Dendritic cell treated with granulocyte-macrophage colony-stimulating factor and Interleukin-4, amounts not matched to agents 40 ng/mL and 50 ng/mL, for 4 days (primary cell): ENCODE measurements at regions of chr11 and their contacts with region 1.

Region 1: GRCh38 chr11:102451681-102452460 is 694 bp downstream of the TMEM123 start:
- H3K4me3 Mint-ChIP-seq: peak overlapping the region; percentile 95
- H3K27ac Mint-ChIP-seq: peak overlapping the region; percentile 96
- H3K4me1 Mint-ChIP-seq: peaks cover 67% of the 10 kb centered on the region
- H3K27me3 Mint-ChIP-seq: no peaks in the 10 kb centered on the region

Region 2: DNA sequence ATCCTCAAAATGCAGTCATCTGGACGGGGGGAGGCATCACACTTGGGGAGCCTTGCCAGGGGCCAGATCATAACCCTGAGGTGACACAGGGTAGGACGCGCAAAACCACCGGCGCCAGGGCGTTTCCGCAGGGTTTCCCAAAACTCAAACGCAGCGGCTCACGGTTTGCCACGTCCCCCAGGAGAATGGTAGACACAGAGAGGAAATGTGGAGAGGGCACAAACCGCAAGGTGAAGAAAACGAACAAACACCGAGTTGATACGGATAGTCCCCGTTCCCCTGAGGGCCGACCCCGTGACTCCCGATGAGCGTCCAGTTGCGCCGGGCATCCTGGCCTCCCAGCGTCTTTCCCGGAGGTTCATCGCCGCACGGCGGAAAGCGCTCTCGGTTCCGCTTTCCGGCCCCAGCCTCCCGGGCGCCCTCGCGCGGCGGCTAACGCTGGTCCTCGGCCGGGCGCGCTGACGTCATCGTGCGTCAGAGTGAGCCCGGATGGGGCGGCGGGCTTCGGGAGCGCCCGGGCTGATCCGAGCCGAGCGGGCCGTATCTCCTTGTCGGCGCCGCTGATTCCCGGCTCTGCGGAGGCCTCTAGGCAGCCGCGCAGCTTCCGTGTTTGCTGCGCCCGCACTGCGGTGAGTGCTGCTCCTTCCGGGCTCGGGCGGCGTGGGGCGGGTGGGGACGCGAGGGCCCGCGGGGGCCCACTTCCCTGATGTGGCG is 105.0 kb before region 1 on chr11 and contains the start of gene BIRC2:
- intact Hi-C with region 1: loop called (anchors 2 kb)
- H3K4me3 Mint-ChIP-seq: peak within 1 kb of the TSS; percentile 88
- H3K27ac Mint-ChIP-seq: peak within 1 kb of the TSS; percentile 94
- H3K4me1 Mint-ChIP-seq: peaks cover 18% of the 10 kb centered on the region
- H3K27me3 Mint-ChIP-seq: no peaks in the 10 kb centered on the region

Region 3: DNA sequence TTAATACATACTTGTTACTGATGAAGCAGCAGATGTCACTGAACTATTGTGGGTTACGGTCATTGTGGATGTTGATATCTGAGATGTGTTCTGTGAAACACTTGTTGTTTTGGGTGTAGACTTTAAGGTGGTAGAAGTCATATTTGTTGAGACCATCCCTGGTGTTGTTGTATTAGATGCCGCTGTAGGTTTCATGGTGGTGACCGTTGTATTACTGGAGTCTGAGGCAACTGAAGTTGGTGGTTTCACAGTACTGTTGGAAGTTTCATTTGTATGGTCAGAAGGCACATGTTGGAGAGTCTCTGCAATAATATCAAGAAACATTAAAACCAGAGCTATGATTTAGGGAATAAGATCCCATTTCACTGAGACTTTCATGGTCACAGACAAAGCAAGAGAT is 50.0 kb before region 1 on chr11:
- intact Hi-C with region 1: loop called (anchors 5 kb)
- H3K4me3 Mint-ChIP-seq: no peak overlapping the region
- H3K27ac Mint-ChIP-seq: peak overlapping the region; percentile 68
- H3K4me1 Mint-ChIP-seq: peaks cover 41% of the 10 kb centered on the region
- H3K27me3 Mint-ChIP-seq: no peaks in the 10 kb centered on the region

Region 4: DNA sequence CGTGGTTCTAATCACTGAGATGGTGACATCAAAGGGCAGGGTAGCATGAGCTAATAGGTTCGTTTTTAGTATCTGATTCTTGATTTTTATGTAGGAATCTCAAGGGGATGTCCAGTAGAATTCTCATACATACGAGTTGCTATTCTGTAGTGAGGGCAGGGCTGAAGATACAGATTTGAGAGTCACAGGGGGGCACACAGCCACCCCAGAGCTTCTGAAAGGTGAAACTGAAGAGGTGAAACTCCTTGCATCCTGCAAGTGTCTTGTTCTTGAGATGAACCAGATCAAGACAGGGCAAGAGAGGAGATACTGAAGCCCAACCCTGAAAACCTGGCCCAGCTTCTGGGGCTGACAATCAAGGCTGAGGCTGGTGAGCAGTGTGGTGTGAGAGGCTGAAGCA is 36.3 kb after region 1 on chr11:
- intact Hi-C with region 1: loop called (anchors 5 kb)
- H3K4me3 Mint-ChIP-seq: no peak overlapping the region
- H3K27ac Mint-ChIP-seq: no peak overlapping the region
- H3K4me1 Mint-ChIP-seq: peaks cover 15% of the 10 kb centered on the region
- H3K27me3 Mint-ChIP-seq: no peaks in the 10 kb centered on the region

Region 5: DNA sequence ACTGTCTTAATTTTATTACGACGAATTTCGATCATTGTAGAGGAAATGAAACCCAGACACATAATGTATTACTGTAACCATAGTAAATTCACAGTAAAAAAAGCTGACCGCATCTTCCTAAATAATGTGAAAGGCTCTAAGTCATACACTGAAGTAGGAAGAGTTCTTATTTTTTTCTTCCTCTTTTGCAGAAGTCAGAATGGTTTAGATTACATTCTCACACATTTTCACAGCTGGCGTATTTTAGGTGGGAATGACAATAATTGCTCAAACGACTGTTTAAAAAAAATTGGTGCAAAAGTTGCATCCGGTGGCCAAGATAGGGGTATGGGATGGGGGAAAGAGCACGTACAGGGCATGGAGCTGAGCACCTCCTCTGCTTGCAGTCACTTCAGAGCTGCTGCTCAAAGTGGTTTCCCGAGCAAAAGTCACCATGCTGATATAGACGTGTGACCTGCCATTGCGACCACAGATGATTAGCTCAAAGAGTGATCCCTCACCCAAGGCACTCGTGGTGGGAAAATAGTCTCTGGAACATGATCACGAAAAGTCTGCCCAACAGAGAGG is 468.3 kb after region 1 on chr11:
- intact Hi-C with region 1: loop called (anchors 10 kb)
- H3K4me3 Mint-ChIP-seq: peak overlapping the region; percentile 1
- H3K27ac Mint-ChIP-seq: no peak overlapping the region
- H3K4me1 Mint-ChIP-seq: peaks cover 57% of the 10 kb centered on the region
- H3K27me3 Mint-ChIP-seq: peaks cover 42% of the 10 kb centered on the region